Ascending aorta (tissue), 2 donors: ENCODE measurements at regions of chr2 and their contacts with region 1.

Region 1: DNA sequence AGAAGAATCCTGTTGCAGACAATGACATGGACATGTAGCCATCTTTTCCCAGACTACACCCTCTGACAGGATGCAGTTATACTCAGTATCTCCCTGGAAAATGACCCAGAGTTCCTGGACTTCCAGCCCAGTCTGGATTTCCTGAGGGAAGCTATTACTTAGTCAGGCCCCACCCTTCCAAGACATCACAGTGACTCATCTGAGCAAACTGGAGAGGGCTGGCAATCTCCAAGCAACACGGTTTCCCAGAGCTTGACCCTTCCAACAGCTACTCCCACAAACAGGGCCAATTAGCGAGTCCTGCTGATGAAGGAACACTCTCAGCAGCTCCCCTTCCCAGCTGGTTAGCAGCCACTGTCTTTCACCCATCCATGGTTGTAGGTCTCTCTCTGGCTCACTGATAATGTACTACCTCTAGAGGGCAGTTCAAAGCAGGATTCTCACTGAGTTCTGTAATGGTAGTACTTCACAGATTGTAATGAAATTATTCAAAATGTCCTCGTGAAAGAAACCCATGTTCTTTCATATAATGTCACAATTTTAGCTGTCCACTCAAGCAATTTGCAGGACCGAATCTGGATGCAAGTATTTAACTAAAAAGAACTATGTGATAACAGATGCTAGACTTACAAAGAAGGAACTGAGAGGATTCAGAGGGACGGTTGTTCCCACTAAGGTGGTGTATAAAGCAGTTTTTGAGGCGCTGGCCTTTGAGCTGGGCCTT is 110.2 kb downstream of the MDH1 start:
- DNase-seq: peak; percentile 26 to 88
- H3K4me3 ChIP-seq: no peak overlapping the region
- H3K27ac ChIP-seq: peak overlapping the region; percentile 54 to 68
- H3K4me1 ChIP-seq: peaks cover 0 to 2% of the 10 kb centered on the region in 2 donors
- H3K27me3 ChIP-seq: no peaks in the 10 kb centered on the region
- CTCF ChIP-seq: peak; percentile 40 to 61 (median 45)

Region 2: DNA sequence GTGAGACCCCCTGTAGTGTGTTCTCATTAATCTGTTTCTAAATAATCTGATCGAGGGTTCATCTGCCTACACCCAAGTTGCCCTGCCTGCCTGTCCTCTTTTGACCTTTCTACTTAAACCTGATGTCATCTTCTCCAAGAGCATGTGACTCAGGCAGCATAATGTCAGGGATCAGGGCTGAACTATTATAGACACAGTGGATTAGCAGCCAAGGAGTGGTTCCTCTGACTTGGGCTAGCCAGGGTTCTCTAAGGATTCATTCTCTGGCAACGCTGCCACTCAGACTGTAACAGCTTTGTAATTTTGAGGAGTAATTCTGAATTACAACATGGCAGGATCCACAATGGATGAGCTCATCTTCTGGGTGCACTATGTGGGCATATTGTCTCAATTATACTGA is 13.8 kb after region 1 on chr2:
- intact Hi-C with region 1: no loop called
- DNase-seq: no peak
- H3K4me3 ChIP-seq: no peak overlapping the region
- H3K27ac ChIP-seq: no peak overlapping the region
- H3K4me1 ChIP-seq: no peaks in the 10 kb centered on the region
- H3K27me3 ChIP-seq: no peaks in the 10 kb centered on the region
- CTCF ChIP-seq: no peak

Region 3: GRCh38 chr2:63738019-63738418 is 39.0 kb after region 1 on chr2:
- intact Hi-C with region 1: loop called (anchors 2 kb)
- DNase-seq: no peak
- H3K4me3 ChIP-seq: no peak overlapping the region
- H3K27ac ChIP-seq: peak overlapping the region; percentile 25 to 40
- H3K4me1 ChIP-seq: peaks cover 0 to 29% of the 10 kb centered on the region in 2 donors
- H3K27me3 ChIP-seq: no peaks in the 10 kb centered on the region
- CTCF ChIP-seq: no peak

Region 4: DNA sequence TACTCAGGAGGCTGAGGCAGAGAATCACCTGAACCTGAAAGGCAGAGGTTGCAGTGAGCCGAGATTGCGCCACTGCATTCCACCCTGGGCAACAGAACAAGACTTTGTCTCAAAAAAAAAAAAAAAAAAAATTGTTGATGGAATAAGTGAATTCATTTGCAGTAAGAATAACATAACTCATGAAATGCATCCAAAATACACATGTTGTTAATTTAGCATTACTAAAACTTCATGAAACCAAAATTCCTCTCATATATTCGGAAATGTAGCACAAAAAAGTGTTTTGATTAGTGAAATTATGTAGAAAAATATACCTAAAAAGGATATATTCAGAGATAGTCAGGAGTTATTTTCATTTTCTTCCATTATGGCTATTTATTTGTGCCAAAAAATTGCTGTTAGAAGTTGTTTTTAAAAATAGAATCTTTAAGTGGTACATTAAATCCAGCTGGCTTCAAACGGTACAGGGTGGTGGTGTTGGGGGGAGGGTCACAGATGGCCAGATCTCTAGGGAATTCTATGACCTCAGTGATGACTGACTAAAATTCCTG is 64.5 kb after region 1 on chr2:
- intact Hi-C with region 1: loop called (anchors 2 kb)
- DNase-seq: peak in 1 of 2 donors; percentile 78
- H3K4me3 ChIP-seq: peak overlapping the region in 1 of 2 donors; percentile 2
- H3K27ac ChIP-seq: peak overlapping the region; percentile 45 to 63
- H3K4me1 ChIP-seq: peaks cover 4 to 14% of the 10 kb centered on the region in 2 donors
- H3K27me3 ChIP-seq: no peaks in the 10 kb centered on the region
- CTCF ChIP-seq: no peak

Region 5: GRCh38 chr2:64018923-64019718 is 320.1 kb after region 1 on chr2 and contains the start of gene VPS54:
- intact Hi-C with region 1: loop called (anchors 10 kb)
- DNase-seq: peak; percentile 16 to 80
- H3K4me3 ChIP-seq: peak within 1 kb of the TSS; percentile 83 to 97
- H3K27ac ChIP-seq: peak within 1 kb of the TSS; percentile 95 to 100
- H3K4me1 ChIP-seq: peaks cover 5 to 19% of the 10 kb centered on the region in 2 donors
- H3K27me3 ChIP-seq: no peaks in the 10 kb centered on the region
- CTCF ChIP-seq: peak in 2 of 3 experiments; percentile 15 to 32
- total RNA-seq, gene VPS54: 4.6 TPM